ENCODE measurements at regions of chr1 and their contacts with region 1.

Region 1: DNA sequence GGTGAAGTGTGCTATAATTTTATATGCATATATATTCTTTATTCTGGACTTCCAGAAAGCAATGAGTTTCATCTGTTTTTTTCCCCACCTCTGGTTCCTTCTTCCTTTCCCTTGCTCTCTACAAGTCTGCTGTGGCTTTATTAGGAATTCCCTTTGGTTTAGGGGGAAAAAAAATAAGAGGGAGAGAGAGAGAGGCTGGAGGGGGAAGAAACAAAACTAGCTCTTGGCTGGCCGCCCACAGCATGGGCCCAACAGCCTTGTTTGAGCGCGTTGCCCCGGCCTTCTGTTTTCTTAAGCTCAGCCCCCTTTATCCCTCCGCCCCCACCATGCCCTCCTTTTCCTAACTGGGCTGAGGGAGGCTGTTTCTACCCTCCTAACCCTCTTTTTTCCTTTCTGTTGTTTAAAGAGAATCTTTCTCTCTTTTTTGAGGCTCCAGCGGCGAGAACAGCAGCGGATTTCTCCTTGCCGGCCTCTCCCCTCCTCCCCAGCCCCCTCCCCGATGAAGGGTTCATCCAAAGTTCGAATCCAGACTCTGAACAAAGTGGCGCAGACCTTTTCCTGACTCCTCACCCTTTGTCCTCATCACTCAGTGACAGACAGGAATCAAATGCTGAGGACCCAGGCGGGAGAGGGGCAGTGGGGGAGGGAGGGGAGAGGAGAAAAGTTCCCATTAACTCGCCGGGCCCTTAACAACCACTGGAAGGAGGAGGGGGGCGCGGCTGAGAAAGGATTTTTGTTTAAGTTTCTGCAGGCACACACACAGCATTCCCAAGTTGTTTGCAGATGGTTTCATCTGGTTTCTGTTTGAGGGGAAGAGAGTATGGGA is 29.7 kb downstream of the PBX1 start:
- DNase-seq: peak; percentile 93
- H3K4me3 ChIP-seq: peak overlapping the region; percentile 16 to 42 (median 38)
- H3K27ac ChIP-seq: peak overlapping the region; percentile 76 to 90 (median 88)
- H3K4me1 ChIP-seq: peaks cover 0 to 97% (median 90%) of the 10 kb centered on the region in 4 donors
- H3K27me3 ChIP-seq: no peaks in the 10 kb centered on the region
- CTCF ChIP-seq: no peak
- EP300 ChIP-seq: no peak
- POLR2A ChIP-seq: no peak

Region 2: GRCh38 chr1:164452549-164452948 is 136.2 kb before region 1 on chr1:
- intact Hi-C with region 1: no loop called
- DNase-seq: no peak
- H3K4me3 ChIP-seq: no peak overlapping the region
- H3K27ac ChIP-seq: no peak overlapping the region
- H3K4me1 ChIP-seq: no peaks in the 10 kb centered on the region
- H3K27me3 ChIP-seq: no peaks in the 10 kb centered on the region
- CTCF ChIP-seq: no peak
- EP300 ChIP-seq: no peak
- POLR2A ChIP-seq: no peak

Region 3: GRCh38 chr1:164473544-164473943 is 115.2 kb before region 1 on chr1:
- intact Hi-C with region 1: no loop called
- DNase-seq: no peak
- H3K4me3 ChIP-seq: no peak overlapping the region
- H3K27ac ChIP-seq: no peak overlapping the region
- H3K4me1 ChIP-seq: no peaks in the 10 kb centered on the region
- H3K27me3 ChIP-seq: no peaks in the 10 kb centered on the region
- CTCF ChIP-seq: no peak
- EP300 ChIP-seq: no peak
- POLR2A ChIP-seq: no peak

Region 4: DNA sequence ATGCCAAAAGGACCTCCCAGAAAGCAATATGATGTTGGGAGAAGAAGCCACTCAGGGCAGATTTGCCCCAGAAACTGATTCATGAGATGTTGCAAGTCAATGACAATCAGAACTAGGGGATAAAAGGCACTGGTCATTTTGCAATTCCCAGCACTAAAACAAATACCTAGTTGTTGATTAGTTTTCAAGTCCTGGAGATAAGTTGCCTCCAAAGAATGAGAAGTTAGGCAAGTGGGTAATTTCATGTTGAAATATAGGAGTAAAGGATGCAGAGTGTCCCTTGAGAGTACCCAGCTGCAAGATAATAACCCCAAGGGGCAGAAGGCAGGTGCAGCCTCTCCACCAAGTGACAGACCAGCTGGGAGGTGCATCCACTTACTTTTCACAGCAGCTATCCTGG is 333.9 kb after region 1 on chr1:
- intact Hi-C with region 1: loop called (anchors 10 kb)
- DNase-seq: no peak
- H3K4me3 ChIP-seq: no peak overlapping the region
- H3K27ac ChIP-seq: no peak overlapping the region
- H3K4me1 ChIP-seq: peaks cover 0 to 33% (median 28%) of the 10 kb centered on the region in 4 donors
- H3K27me3 ChIP-seq: no peaks in the 10 kb centered on the region
- CTCF ChIP-seq: no peak
- EP300 ChIP-seq: no peak
- POLR2A ChIP-seq: no peak

Measured in sigmoid colon (tissue), 7 donors.